ENCODE measurements at regions of chr2 and their contacts with region 1.

Region 1: GRCh38 chr2:207334624-207335371 is 169.1 kb upstream of the KLF7 start:
- DNase-seq: peak in 1 of 9 donors; percentile 57
- ATAC-seq: no peak
- H3K4me3 ChIP-seq: no peak overlapping the region
- H3K4me3 Mint-ChIP-seq: peak overlapping the region in 2 of 10 donors; percentile 20 to 59
- H3K27ac ChIP-seq: no peak overlapping the region
- H3K27ac Mint-ChIP-seq: peak overlapping the region in 1 of 9 donors; percentile 84
- H3K4me1 ChIP-seq: peaks cover 0 to 20% of the 10 kb centered on the region in 2 donors
- H3K4me1 Mint-ChIP-seq: peaks cover 9 to 75% (median 17%) of the 10 kb centered on the region in 7 donors
- H3K27me3 ChIP-seq: no peaks in the 10 kb centered on the region
- H3K27me3 Mint-ChIP-seq: no peaks in the 10 kb centered on the region

Region 2: GRCh38 chr2:207238831-207239701 is 95.7 kb before region 1 on chr2:
- CTCF ChIA-PET with region 1: no interaction called
- POLR2A ChIA-PET with region 1: no interaction called
- intact Hi-C with region 1: loop called in 1 of 2 experiments (anchors 2 kb)
- DNase-seq: peak in 1 of 9 donors; percentile 54
- ATAC-seq: peak; percentile 69
- H3K4me3 ChIP-seq: no peak overlapping the region
- H3K4me3 Mint-ChIP-seq: peak overlapping the region in 6 of 10 donors; percentile 13 to 63 (median 44)
- H3K27ac ChIP-seq: no peak overlapping the region
- H3K27ac Mint-ChIP-seq: peak overlapping the region in 4 of 9 donors; percentile 13 to 77 (median 42)
- H3K4me1 ChIP-seq: peaks cover 0 to 27% of the 10 kb centered on the region in 2 donors
- H3K4me1 Mint-ChIP-seq: peaks cover 0 to 46% (median 17%) of the 10 kb centered on the region in 7 donors
- H3K27me3 ChIP-seq: no peaks in the 10 kb centered on the region
- H3K27me3 Mint-ChIP-seq: no peaks in the 10 kb centered on the region

Region 3: DNA sequence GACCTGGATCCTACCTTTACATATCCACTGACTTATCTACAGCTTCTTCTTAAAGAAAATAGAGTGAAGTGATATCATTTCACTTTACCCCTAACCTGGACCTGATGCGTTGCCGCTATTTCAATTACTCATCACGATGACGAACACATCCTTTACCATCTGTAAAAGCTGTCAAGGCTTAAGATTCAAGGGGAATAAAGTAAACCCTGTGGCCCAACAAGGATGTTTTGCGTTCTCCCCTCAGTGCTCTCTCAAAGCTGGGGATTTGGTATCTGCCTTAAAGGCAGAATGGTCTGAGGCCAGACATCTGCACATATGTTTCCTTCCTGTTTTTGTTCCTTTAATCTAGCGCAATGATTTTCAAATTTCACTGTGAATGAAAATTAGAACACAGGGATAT is 68.9 kb before region 1 on chr2:
- CTCF ChIA-PET with region 1: no interaction called
- POLR2A ChIA-PET with region 1: no interaction called
- intact Hi-C with region 1: no loop called
- DNase-seq: no peak
- ATAC-seq: peak; percentile 31
- H3K4me3 ChIP-seq: no peak overlapping the region
- H3K4me3 Mint-ChIP-seq: no peak overlapping the region
- H3K27ac ChIP-seq: no peak overlapping the region
- H3K27ac Mint-ChIP-seq: peak overlapping the region in 1 of 9 donors; percentile 8
- H3K4me1 ChIP-seq: no peaks in the 10 kb centered on the region
- H3K4me1 Mint-ChIP-seq: no peaks in the 10 kb centered on the region
- H3K27me3 ChIP-seq: no peaks in the 10 kb centered on the region
- H3K27me3 Mint-ChIP-seq: peaks cover 0 to 3% (median 0%) of the 10 kb centered on the region in 5 donors

Region 4: DNA sequence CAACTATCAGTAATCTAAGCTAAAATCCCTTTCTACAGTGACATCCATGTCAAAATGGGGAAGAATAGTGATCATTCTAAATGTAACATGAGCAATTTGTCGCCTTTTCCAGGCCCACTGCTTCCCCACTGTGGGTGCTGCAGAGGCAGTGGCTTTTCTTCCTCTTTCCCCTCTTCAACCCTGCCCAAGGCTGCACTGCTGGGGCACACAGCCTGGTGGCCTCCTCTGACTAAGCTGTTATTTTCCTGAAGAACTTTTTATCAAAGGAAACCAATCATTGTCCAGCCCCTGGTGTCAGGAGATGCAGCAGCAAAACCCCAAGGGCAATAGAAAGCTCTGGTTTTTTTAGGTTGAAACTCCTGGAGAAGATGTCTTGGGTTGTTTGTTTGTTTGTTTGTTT is 51.4 kb before region 1 on chr2:
- CTCF ChIA-PET with region 1: no interaction called
- POLR2A ChIA-PET with region 1: no interaction called
- intact Hi-C with region 1: loop called in 1 of 2 experiments (anchors 5 kb)
- DNase-seq: no peak
- ATAC-seq: peak; percentile 84
- H3K4me3 ChIP-seq: no peak overlapping the region
- H3K4me3 Mint-ChIP-seq: peak overlapping the region in 8 of 10 donors; percentile 0 to 81 (median 60)
- H3K27ac ChIP-seq: no peak overlapping the region
- H3K27ac Mint-ChIP-seq: peak overlapping the region; percentile 17 to 86 (median 60)
- H3K4me1 ChIP-seq: peaks cover 0 to 10% of the 10 kb centered on the region in 2 donors
- H3K4me1 Mint-ChIP-seq: peaks cover 13 to 41% (median 36%) of the 10 kb centered on the region in 7 donors
- H3K27me3 ChIP-seq: no peaks in the 10 kb centered on the region
- H3K27me3 Mint-ChIP-seq: no peaks in the 10 kb centered on the region

Region 5: DNA sequence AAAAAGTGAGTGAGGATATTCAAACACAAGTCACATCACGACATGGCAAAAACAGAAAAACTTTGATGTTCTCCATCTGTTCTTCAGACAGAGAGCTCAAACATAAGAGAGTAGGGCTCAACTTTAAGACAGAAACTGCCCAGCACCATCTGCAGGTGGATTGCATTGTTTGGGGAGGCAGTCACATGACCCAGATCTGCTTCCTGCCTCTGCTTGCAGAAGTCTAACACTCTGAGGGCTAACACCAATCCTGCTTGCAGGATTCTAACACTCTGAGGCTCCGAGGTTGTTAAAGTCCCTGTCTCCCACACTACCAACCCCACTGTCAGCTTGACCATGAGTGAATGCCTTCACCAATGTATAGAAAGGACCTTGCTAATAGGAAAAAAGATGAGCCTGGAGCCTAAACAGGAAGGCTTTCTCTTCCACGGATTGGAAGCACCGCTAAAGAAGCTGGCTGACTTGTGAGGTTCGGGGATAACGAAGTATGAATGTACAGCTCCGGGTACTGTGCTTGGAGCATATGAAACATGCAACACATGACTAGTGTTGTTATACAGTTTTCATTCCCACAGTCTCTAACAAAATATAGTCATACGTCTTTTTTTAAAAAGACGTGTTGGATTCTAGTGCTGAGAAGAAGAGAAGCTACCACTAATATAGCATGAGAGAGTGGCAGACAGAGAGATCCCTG is 18.3 kb after region 1 on chr2:
- CTCF ChIA-PET with region 1: no interaction called
- POLR2A ChIA-PET with region 1: no interaction called
- intact Hi-C with region 1: loop called in 1 of 2 experiments (anchors 2 kb)
- DNase-seq: peak in 5 of 9 donors; percentile 8 to 37 (median 32)
- ATAC-seq: peak; percentile 51
- H3K4me3 ChIP-seq: no peak overlapping the region
- H3K4me3 Mint-ChIP-seq: peak overlapping the region in 2 of 10 donors; percentile 17 to 26
- H3K27ac ChIP-seq: no peak overlapping the region
- H3K27ac Mint-ChIP-seq: peak overlapping the region in 3 of 9 donors; percentile 6 to 65 (median 53)
- H3K4me1 ChIP-seq: no peaks in the 10 kb centered on the region
- H3K4me1 Mint-ChIP-seq: peaks cover 0 to 12% (median 9%) of the 10 kb centered on the region in 7 donors
- H3K27me3 ChIP-seq: no peaks in the 10 kb centered on the region
- H3K27me3 Mint-ChIP-seq: no peaks in the 10 kb centered on the region

Region 6: DNA sequence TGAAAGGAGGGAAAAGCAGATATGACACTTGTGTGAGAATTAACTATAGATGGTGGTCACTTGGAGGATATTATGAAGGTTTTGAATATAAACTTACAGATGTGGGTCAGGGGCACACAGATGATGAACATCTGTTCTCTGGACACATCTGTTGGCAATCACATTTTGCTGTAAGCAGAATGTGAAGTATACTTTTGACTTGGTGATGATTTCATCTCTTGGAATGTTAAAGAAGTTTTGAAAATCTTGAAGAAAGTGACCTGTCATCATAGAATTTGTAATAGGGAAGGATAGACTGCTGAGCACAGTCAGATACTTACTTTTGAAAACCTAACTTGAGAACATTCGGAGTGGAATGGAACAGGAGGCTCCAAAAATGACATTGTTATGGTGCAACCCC is 971.5 kb after region 1 on chr2:
- CTCF ChIA-PET with region 1: no interaction called
- POLR2A ChIA-PET with region 1: no interaction called
- intact Hi-C with region 1: no loop called
- DNase-seq: no peak
- ATAC-seq: no peak
- H3K4me3 ChIP-seq: no peak overlapping the region
- H3K4me3 Mint-ChIP-seq: no peak overlapping the region
- H3K27ac ChIP-seq: no peak overlapping the region
- H3K27ac Mint-ChIP-seq: peak overlapping the region in 1 of 9 donors; percentile 3
- H3K4me1 ChIP-seq: no peaks in the 10 kb centered on the region
- H3K4me1 Mint-ChIP-seq: peaks cover 0 to 12% (median 2%) of the 10 kb centered on the region in 7 donors
- H3K27me3 ChIP-seq: no peaks in the 10 kb centered on the region
- H3K27me3 Mint-ChIP-seq: no peaks in the 10 kb centered on the region